ENCODE measurements at regions of chr12 and their contacts with region 1.

Region 1: GRCh38 chr12:76621582-76622024 is 62.0 kb upstream of the OSBPL8 start:
- DNase-seq: peak; percentile 33 to 79 (median 72)
- ATAC-seq: peak; percentile 94
- H3K4me3 ChIP-seq: no peak overlapping the region
- H3K4me3 Mint-ChIP-seq: no peak overlapping the region
- H3K27ac ChIP-seq: no peak overlapping the region
- H3K27ac Mint-ChIP-seq: no peak overlapping the region
- H3K4me1 ChIP-seq: no peaks in the 10 kb centered on the region
- H3K4me1 Mint-ChIP-seq: peaks cover 3% of the 10 kb centered on the region
- H3K27me3 ChIP-seq: no peaks in the 10 kb centered on the region
- H3K27me3 Mint-ChIP-seq: no peaks in the 10 kb centered on the region
- CTCF ChIP-seq: peak; percentile 98

Region 2: DNA sequence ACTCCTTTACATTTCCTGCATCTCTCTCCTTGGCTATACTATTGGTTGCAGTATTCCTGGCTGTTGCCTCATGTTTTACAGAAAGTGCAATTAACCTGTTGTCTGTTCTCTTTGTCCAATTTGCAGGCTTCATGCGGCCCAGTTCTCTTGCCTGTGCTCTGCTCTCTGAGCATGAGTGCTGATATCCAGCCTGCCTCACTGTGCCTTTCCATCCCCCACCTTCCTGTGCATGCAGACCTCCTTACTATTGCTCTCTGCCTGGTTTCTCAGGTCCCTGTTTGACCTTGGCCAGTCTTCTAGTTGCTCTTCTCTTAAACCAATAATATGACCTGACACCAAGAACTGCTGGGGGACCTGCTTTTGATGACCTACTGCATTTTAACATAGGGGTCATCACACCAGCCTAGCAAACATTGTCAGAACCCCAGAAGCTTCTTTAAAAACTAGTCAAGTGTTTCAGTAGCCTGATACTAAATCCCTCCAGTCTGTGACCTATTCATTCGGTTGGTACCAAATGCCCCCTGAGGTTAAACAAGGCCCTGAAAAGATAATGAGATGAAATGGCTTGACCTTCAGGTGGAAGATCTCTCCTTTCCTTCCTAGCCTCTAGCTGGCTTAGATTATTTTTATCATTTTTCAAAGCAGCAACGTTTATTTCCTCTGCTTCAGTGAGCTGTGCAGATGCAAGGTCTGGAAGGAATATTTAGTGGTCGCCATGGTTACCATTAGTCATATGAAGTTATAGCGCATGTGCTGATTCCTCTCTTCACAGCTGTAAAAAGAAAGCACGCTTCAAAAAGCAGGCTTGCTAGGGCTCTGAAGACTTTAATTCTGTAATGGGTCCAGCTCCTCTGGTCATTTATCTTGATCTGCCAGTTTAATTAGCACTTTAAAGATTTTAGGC is 806.5 kb before region 1 on chr12:
- CTCF ChIA-PET with region 1: no interaction called
- POLR2A ChIA-PET with region 1: no interaction called
- intact Hi-C with region 1: no loop called
- DNase-seq: peak in 2 of 9 experiments; percentile 50 to 59
- ATAC-seq: peak; percentile 46
- H3K4me3 ChIP-seq: no peak overlapping the region
- H3K4me3 Mint-ChIP-seq: no peak overlapping the region
- H3K27ac ChIP-seq: no peak overlapping the region
- H3K27ac Mint-ChIP-seq: no peak overlapping the region
- H3K4me1 ChIP-seq: no peaks in the 10 kb centered on the region
- H3K4me1 Mint-ChIP-seq: peaks cover 4% of the 10 kb centered on the region
- H3K27me3 ChIP-seq: no peaks in the 10 kb centered on the region
- H3K27me3 Mint-ChIP-seq: peaks cover 3% of the 10 kb centered on the region
- CTCF ChIP-seq: no peak

Region 3: GRCh38 chr12:76515262-76515661 is 106.3 kb before region 1 on chr12:
- CTCF ChIA-PET with region 1: no interaction called
- POLR2A ChIA-PET with region 1: no interaction called
- intact Hi-C with region 1: no loop called
- DNase-seq: no peak
- ATAC-seq: no peak
- H3K4me3 ChIP-seq: no peak overlapping the region
- H3K4me3 Mint-ChIP-seq: no peak overlapping the region
- H3K27ac ChIP-seq: no peak overlapping the region
- H3K27ac Mint-ChIP-seq: no peak overlapping the region
- H3K4me1 ChIP-seq: peaks cover 13% of the 10 kb centered on the region
- H3K4me1 Mint-ChIP-seq: peaks cover 59% of the 10 kb centered on the region
- H3K27me3 ChIP-seq: no peaks in the 10 kb centered on the region
- H3K27me3 Mint-ChIP-seq: no peaks in the 10 kb centered on the region
- CTCF ChIP-seq: no peak

Region 4: DNA sequence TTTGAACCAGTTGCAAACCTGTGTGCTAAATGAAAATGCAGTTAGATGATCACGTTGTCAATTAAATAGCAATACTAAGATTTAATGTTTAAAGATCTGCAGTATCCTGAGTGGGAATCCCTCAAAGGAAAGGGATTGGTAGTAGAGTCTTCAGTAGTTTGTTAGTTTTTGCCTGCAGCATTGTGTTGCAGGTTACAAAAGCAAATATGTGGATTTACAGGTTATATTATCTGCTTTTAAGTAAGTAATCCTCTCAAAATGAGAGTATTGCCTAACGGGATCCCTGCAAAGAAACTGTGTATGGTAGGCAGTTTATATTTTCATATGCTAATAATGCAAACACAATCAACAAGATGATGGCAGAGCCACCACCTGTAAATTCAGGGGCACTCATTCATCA is 10.1 kb after region 1 on chr12:
- CTCF ChIA-PET with region 1: interaction called, 11 read pairs
- POLR2A ChIA-PET with region 1: no interaction called
- intact Hi-C with region 1: no loop called
- DNase-seq: no peak
- ATAC-seq: no peak
- H3K4me3 ChIP-seq: no peak overlapping the region
- H3K4me3 Mint-ChIP-seq: no peak overlapping the region
- H3K27ac ChIP-seq: no peak overlapping the region
- H3K27ac Mint-ChIP-seq: no peak overlapping the region
- H3K4me1 ChIP-seq: no peaks in the 10 kb centered on the region
- H3K4me1 Mint-ChIP-seq: no peaks in the 10 kb centered on the region
- H3K27me3 ChIP-seq: no peaks in the 10 kb centered on the region
- H3K27me3 Mint-ChIP-seq: no peaks in the 10 kb centered on the region
- CTCF ChIP-seq: no peak

Region 5: DNA sequence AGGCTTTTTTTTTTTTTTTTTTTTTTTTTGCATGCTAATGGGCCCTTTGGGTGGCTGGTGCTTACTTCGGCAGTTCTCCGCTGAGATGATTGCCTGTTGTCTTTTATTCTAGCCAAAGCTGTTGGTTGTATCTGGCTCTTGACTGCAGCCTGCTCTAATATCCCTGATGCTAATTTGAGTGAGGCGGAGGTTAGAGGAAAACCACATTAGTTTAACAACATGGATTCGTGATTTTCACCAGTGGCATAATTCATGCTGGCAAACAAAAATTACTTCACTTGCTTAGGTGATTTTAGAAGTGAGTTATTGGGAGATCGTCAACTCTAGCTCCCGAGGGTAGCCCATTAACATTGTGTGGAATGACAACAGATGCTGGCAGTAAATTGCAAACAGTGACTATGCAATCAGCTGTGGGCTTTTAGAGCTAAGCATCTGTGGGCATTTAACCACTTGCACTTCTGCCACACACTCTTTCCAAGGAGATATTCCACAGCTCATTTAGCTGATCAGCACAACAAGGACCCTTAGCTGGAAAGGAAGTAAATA is 44.8 kb after region 1 on chr12:
- CTCF ChIA-PET with region 1: no interaction called
- POLR2A ChIA-PET with region 1: no interaction called
- intact Hi-C with region 1: no loop called
- DNase-seq: no peak
- ATAC-seq: no peak
- H3K4me3 ChIP-seq: no peak overlapping the region
- H3K4me3 Mint-ChIP-seq: no peak overlapping the region
- H3K27ac ChIP-seq: no peak overlapping the region
- H3K27ac Mint-ChIP-seq: no peak overlapping the region
- H3K4me1 ChIP-seq: no peaks in the 10 kb centered on the region
- H3K4me1 Mint-ChIP-seq: peaks cover 6% of the 10 kb centered on the region
- H3K27me3 ChIP-seq: no peaks in the 10 kb centered on the region
- H3K27me3 Mint-ChIP-seq: peaks cover 4% of the 10 kb centered on the region
- CTCF ChIP-seq: no peak

Region 6: GRCh38 chr12:76927170-76927784 is 305.7 kb after region 1 on chr12:
- CTCF ChIA-PET with region 1: interaction called, 3 read pairs
- POLR2A ChIA-PET with region 1: no interaction called
- intact Hi-C with region 1: loop called in 1 of 2 experiments (anchors 2 kb)
- DNase-seq: peak in 3 of 9 experiments; percentile 5 to 28 (median 15)
- ATAC-seq: no peak
- H3K4me3 ChIP-seq: no peak overlapping the region
- H3K4me3 Mint-ChIP-seq: no peak overlapping the region
- H3K27ac ChIP-seq: no peak overlapping the region
- H3K27ac Mint-ChIP-seq: no peak overlapping the region
- H3K4me1 ChIP-seq: no peaks in the 10 kb centered on the region
- H3K4me1 Mint-ChIP-seq: no peaks in the 10 kb centered on the region
- H3K27me3 ChIP-seq: no peaks in the 10 kb centered on the region
- H3K27me3 Mint-ChIP-seq: peaks cover 6% of the 10 kb centered on the region
- CTCF ChIP-seq: no peak

Region 7: GRCh38 chr12:76957301-76957700 is 335.7 kb after region 1 on chr12:
- CTCF ChIA-PET with region 1: no interaction called
- POLR2A ChIA-PET with region 1: no interaction called
- intact Hi-C with region 1: no loop called
- DNase-seq: no peak
- ATAC-seq: no peak
- H3K4me3 ChIP-seq: no peak overlapping the region
- H3K4me3 Mint-ChIP-seq: no peak overlapping the region
- H3K27ac ChIP-seq: no peak overlapping the region
- H3K27ac Mint-ChIP-seq: no peak overlapping the region
- H3K4me1 ChIP-seq: no peaks in the 10 kb centered on the region
- H3K4me1 Mint-ChIP-seq: no peaks in the 10 kb centered on the region
- H3K27me3 ChIP-seq: no peaks in the 10 kb centered on the region
- H3K27me3 Mint-ChIP-seq: peaks cover 3% of the 10 kb centered on the region
- CTCF ChIP-seq: no peak

Region 8: DNA sequence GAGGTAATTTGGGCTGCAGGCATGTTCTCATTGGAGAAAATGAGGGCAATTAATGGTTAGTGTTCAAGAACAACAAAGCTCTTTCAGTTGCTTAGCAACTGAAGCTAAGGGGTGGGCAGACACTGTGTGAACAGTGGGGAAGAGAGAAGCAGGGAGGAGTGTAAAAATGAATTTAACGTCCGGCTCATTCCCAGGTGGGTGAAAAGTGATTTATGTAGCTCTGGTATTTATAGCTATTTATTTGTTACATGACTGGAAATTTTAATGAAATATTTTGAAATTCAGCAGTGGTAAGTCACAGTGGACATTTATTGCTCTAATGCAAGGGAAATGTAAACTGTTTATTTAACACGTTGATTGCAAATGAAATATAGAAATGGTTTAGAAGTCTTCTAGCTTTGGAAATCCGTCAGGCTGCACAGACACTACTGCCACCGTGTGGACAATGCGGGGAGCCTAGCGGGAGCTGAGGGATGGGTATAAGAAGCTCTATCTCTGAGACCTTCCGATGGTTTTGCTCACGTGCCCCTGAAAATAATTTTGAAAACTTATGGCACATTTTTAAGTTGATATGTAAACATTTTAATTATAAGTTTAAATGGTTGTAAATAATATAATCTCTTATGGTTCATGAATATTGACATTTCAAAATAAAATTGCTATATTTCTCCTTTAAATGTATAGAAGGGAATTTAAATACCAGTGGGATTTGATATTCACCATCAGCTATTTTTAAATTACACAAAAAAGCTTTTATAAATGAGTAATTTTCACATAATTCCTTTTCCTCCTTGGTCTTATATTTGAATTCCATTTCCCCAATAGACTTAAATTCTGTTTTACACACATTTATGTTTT is 389.3 kb after region 1 on chr12:
- CTCF ChIA-PET with region 1: interaction called, 36 read pairs
- POLR2A ChIA-PET with region 1: interaction called, 3 read pairs
- intact Hi-C with region 1: loop called (anchors 1 kb)
- DNase-seq: peak; percentile 34 to 76 (median 59)
- ATAC-seq: peak; percentile 69
- H3K4me3 ChIP-seq: no peak overlapping the region
- H3K4me3 Mint-ChIP-seq: no peak overlapping the region
- H3K27ac ChIP-seq: no peak overlapping the region
- H3K27ac Mint-ChIP-seq: no peak overlapping the region
- H3K4me1 ChIP-seq: no peaks in the 10 kb centered on the region
- H3K4me1 Mint-ChIP-seq: peaks cover 2% of the 10 kb centered on the region
- H3K27me3 ChIP-seq: no peaks in the 10 kb centered on the region
- H3K27me3 Mint-ChIP-seq: peaks cover 2% of the 10 kb centered on the region
- CTCF ChIP-seq: peak; percentile 87

Measured in CD8-positive, alpha-beta T cell (primary cell).